Activated CD4-positive, alpha-beta T cell treated with anti-CD3 and anti-CD28 coated beads, Interleukin-2, amount 10 ng/mL, durations not matched to agents 24 days and 14 days (primary cell): ENCODE measurements at regions of chr2 and their contacts with region 1.

Region 1: GRCh38 chr2:8477552-8478470 is 204.0 kb upstream of the ID2 start:
- DNase-seq: peak; percentile 76
- H3K4me3 Mint-ChIP-seq: peak overlapping the region; percentile 53
- H3K27ac Mint-ChIP-seq: peak overlapping the region; percentile 84
- H3K4me1 Mint-ChIP-seq: peaks cover 84% of the 10 kb centered on the region
- H3K27me3 Mint-ChIP-seq: no peaks in the 10 kb centered on the region

Region 2: GRCh38 chr2:8169443-8169842 is 308.4 kb before region 1 on chr2:
- intact Hi-C with region 1: loop called (anchors 1 kb)
- DNase-seq: no peak
- H3K4me3 Mint-ChIP-seq: no peak overlapping the region
- H3K27ac Mint-ChIP-seq: no peak overlapping the region
- H3K4me1 Mint-ChIP-seq: peaks cover 10% of the 10 kb centered on the region
- H3K27me3 Mint-ChIP-seq: no peaks in the 10 kb centered on the region

Region 3: DNA sequence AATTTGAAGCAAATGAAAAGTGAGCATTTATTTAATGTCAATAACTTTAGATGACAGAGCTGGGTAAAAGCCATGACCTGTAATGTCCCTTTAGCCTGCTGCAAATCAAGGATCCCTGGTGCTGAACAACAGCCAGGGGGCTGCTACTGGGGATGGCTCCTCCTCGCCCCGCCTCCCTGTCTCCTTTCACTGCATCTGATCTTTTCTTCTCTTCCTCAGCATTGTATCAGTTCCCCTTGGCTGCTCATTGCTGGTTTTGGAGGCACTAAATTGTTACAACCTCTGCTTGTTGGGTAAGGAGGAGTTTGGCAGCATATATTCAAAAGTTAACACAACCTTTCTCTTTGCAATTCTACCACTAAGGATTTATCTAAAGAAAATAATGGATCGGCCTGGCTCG is 32.2 kb before region 1 on chr2:
- intact Hi-C with region 1: no loop called
- DNase-seq: no peak
- H3K4me3 Mint-ChIP-seq: no peak overlapping the region
- H3K27ac Mint-ChIP-seq: no peak overlapping the region
- H3K4me1 Mint-ChIP-seq: peaks cover 11% of the 10 kb centered on the region
- H3K27me3 Mint-ChIP-seq: peaks cover 35% of the 10 kb centered on the region

Region 4: DNA sequence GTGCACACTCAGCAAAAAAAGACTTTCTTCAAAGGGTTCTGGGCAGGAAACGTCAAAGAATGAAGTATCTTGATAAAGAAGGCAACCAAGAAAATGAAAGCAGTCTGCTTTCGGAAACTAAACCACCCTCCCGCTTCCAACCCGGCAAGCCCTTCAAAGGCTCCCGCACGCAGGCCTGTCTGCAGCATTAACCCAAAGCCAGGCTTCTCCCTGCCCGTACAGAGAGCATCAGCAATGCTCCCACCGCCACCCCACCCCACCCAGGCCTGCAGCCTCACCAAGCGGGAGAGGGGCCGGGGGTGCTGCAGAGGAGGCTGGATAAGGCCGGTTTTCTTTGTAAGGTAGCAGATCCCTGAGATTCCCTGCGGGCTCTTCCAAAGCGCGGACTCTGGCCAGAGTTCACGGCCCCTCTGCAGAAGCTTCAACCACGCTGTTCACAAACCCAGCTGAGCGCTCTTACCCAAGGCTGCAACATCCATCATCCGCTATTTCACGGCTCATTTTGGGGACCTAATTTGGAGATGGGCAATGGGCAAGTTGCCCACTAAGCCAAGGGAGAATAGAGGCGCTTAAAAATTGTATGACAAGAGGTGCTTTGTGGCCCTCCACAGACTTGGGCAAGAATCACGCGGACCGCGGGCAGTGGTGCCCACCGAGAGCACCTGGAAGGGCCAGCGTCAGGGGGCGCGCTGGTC is 21.5 kb before region 1 on chr2:
- intact Hi-C with region 1: loop called (anchors 1 kb)
- DNase-seq: peak; percentile 90
- H3K4me3 Mint-ChIP-seq: peak overlapping the region; percentile 79
- H3K27ac Mint-ChIP-seq: peak overlapping the region; percentile 91
- H3K4me1 Mint-ChIP-seq: peaks cover 50% of the 10 kb centered on the region
- H3K27me3 Mint-ChIP-seq: peaks cover 10% of the 10 kb centered on the region

Region 5: DNA sequence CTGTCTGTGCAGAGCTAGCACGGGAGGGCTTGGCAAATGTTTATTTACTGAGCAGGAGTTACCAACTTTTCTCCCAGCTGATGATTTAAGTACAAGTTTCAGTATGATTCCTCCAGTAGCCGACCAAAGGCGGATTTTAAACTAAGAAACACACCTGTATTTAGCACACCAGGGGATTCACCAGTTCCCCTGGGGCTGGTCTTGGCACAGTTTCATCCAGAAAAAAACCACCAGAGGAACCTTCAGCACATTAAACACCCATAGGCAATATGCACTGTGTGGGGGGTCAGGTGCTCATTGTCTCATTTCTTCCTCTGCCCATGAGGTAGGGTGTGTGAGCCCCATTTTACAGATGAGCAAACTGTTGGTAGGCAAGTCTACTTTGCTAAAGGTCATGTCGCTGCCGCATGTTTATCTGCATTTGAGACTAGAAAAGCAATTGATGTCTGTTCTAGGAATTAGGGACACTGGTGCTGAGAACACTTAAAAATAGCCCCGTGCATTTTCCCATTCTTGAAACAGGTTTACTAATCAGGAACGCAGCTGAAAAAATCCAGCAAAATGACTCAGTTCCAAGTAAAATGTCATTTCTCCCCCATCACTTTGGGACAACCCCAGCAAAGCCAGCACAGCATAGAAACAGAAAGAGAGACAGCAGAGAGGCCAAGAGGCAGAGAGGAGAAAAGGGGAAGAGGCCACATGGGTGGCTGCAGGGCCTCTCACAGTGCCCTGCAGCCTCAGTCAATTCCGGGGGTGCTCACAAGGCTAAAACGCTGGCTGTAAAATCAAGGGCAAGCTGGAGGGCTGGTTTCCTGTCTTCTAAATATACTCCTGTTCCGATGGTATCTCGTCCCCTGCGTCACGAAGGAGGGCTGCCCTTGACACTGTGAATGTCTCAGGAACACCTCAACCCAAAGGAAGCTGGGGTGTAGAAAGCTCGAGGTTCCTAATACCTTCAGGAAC is 37.3 kb after region 1 on chr2:
- intact Hi-C with region 1: loop called (anchors 1 kb)
- DNase-seq: peak; percentile 87
- H3K4me3 Mint-ChIP-seq: peak overlapping the region; percentile 58
- H3K27ac Mint-ChIP-seq: peak overlapping the region; percentile 96
- H3K4me1 Mint-ChIP-seq: peaks cover 63% of the 10 kb centered on the region
- H3K27me3 Mint-ChIP-seq: no peaks in the 10 kb centered on the region

Region 6: DNA sequence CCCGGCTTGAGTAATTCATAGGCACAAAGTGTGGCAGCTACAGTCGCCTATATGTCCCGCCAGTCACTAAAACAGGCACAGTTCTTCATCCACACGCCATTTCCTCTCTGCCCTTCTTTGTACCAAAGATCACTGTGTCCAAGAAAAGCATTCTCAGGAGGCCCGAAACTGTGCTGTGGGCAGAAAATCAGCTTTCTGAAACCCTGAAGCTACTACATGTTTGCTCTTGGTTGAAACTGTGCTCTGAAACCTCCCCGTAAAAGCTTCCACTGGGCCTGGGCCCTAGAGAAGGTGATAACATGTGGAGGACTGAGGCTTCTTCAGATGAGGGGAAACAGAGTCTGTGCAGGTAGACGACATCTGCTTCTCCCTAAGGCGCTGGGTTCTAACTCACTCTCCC is 128.4 kb after region 1 on chr2:
- intact Hi-C with region 1: loop called (anchors 5 kb)
- DNase-seq: no peak
- H3K4me3 Mint-ChIP-seq: no peak overlapping the region
- H3K27ac Mint-ChIP-seq: no peak overlapping the region
- H3K4me1 Mint-ChIP-seq: peaks cover 22% of the 10 kb centered on the region
- H3K27me3 Mint-ChIP-seq: peaks cover 3% of the 10 kb centered on the region